ENCODE measurements at regions of chr18 and their contacts with region 1.

Region 1: GRCh38 chr18:31429621-31430020 is 17.9 kb upstream of the DSG3 start:
- DNase-seq: no peak
- H3K4me3 Mint-ChIP-seq: no peak overlapping the region
- H3K27ac Mint-ChIP-seq: no peak overlapping the region
- H3K4me1 Mint-ChIP-seq: no peaks in the 10 kb centered on the region
- H3K27me3 Mint-ChIP-seq: no peaks in the 10 kb centered on the region

Region 2: GRCh38 chr18:31486165-31486564 is 56.5 kb after region 1 on chr18:
- CTCF ChIA-PET with region 1: no interaction called
- intact Hi-C with region 1: no loop called
- DNase-seq: no peak
- H3K4me3 Mint-ChIP-seq: no peak overlapping the region
- H3K27ac Mint-ChIP-seq: no peak overlapping the region
- H3K4me1 Mint-ChIP-seq: peaks cover 4% of the 10 kb centered on the region
- H3K27me3 Mint-ChIP-seq: peaks cover 7% of the 10 kb centered on the region

Region 3: DNA sequence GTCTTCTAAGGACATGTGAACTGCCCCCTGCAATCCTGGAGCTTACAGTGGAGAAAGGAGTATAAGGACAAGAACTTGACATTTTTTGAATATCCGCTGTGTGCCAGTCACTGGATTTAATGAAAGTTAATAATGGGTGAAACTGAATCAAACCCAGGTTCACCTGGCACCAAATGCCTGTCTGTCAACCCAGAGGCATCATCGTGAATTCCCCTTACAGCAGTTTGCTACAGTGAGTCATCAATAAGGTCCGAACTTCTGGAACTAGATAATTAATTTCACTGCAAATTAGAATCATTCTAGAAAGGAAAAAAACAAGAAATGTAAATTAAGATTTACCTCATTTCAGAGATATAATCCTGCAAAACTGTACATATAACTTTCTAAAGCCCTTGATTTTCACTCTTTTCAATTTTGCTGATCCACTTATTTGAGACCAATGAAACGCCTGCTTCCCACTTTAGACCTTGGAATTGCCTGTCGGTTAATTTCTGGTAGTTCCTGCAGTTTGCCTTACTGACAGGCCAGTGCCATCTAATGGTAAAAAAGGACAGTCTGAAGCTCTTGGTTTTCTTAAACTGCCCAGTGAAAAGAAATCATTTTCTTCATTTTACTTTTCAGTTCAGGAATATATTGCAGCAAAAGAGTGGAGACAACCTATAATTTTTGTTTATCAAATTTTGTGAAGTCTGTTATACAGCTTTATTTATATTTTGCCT is 76.6 kb after region 1 on chr18:
- CTCF ChIA-PET with region 1: interaction called, 5 read pairs
- intact Hi-C with region 1: loop called (anchors 5 kb)
- DNase-seq: no peak
- H3K4me3 Mint-ChIP-seq: no peak overlapping the region
- H3K27ac Mint-ChIP-seq: no peak overlapping the region
- H3K4me1 Mint-ChIP-seq: no peaks in the 10 kb centered on the region
- H3K27me3 Mint-ChIP-seq: peaks cover 9% of the 10 kb centered on the region

Region 4: DNA sequence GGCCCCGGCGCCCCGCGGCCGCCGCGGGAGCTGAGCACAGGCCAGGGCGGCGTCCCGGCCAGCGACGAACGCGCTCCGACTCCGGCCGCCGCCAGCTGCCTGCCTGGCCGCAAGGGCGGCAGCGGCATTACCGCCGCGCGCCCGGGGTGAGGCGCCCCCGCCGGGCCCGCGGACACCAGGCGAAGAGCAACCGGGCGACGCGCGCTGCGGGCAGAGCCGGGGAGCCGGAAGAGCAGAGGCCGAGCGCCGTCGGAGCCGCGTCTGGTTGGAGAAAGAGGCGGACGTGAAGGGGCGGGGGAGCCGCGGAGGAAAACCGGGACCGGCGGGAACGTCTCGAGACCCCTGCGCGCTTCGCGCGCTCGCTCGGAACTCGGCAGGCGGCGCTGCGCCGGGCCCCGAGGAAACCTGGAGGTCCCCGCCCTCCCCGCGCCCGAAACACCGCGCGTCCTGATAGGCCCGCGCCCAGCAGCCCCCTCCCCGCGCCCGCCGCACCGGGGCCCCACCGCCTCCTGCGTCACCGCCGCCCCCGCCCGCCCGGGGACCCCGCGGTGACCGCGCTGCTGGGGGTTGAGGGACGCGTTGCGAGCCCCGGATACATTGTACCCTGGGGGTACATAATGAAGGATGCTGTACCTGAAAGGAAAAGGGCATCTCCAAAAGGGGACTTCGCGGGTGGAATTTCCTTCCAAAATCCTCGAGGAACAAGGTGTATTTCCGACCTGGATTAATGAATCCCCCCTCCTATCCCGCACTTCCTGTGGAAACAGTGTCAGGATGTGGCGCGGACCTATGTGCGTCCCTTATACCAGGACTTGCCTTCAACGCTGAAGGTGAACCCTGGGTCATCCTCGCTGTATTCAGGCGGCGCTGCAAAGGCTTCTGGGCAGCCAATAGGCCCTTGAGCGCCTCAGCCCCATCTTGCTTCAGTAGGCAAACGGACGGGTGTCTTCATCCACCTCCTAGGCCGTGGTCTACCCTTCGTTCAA is 255.8 kb after region 1 on chr18:
- CTCF ChIA-PET with region 1: no interaction called
- intact Hi-C with region 1: no loop called
- DNase-seq: peak; percentile 73
- H3K4me3 Mint-ChIP-seq: peak overlapping the region; percentile 84
- H3K27ac Mint-ChIP-seq: no peak overlapping the region
- H3K4me1 Mint-ChIP-seq: peaks cover 16% of the 10 kb centered on the region
- H3K27me3 Mint-ChIP-seq: peaks cover 38% of the 10 kb centered on the region